B cell (primary cell): ENCODE measurements at regions of chrX and their contacts with region 1.

Region 1: GRCh38 chrX:150486011-150486410 is 82.4 kb upstream of the MTM1 start:
- DNase-seq: peak; percentile 49
- ATAC-seq: peak; percentile 33
- H3K4me3 ChIP-seq: no peak overlapping the region
- H3K4me3 Mint-ChIP-seq: no peak overlapping the region
- H3K27ac ChIP-seq: no peak overlapping the region
- H3K27ac Mint-ChIP-seq: no peak overlapping the region
- H3K4me1 ChIP-seq: no peaks in the 10 kb centered on the region
- H3K4me1 Mint-ChIP-seq: peaks cover 2% of the 10 kb centered on the region
- H3K27me3 ChIP-seq: no peaks in the 10 kb centered on the region
- H3K27me3 Mint-ChIP-seq: no peaks in the 10 kb centered on the region
- CTCF ChIP-seq: peak; percentile 49

Region 2: DNA sequence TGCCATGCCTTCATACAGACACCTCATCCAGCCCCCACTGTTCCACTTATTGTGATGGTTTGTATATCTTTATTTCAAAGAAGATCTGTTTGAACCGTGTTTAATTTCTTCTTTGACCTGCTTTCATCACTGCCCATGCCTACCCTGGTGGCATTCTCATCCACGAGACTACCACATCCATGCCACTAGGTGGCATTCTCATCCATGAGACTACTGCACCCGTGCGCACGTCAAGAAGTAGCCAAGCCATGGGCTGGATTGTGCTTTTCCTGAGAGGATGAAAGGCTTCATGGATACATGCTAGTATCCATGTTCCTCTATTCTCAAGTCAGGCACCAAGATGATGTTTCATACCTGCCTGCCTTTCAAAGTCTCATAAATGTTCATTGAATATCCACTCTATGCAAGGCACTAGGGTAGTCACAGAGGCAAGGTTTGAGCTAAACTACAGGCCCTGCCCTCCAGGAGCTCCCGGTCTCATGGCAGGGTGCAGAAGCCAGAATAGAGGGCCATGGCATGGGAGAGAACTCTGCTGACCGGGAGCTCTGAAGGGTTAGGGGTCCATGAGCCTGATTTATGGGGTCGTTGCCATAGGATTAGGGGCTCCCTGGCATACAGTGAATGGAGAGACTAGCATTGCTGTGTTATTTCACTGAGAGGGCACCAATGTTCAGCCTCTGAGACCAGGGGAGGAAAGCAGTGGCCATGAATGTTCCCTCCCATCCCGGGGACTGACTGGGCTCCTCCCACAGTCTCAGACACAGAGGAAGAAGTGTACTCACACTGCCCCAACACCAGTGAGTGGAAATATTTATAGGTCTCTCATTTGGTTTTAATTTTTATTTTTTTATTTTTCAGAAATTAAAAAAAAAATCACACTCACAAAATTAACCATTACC is 522.9 kb before region 1 on chrX:
- CTCF ChIA-PET with region 1: no interaction called
- POLR2A ChIA-PET with region 1: no interaction called
- intact Hi-C with region 1: loop called (anchors 5 kb)
- DNase-seq: peak; percentile 29
- ATAC-seq: no peak
- H3K4me3 ChIP-seq: no peak overlapping the region
- H3K4me3 Mint-ChIP-seq: no peak overlapping the region
- H3K27ac ChIP-seq: no peak overlapping the region
- H3K27ac Mint-ChIP-seq: no peak overlapping the region
- H3K4me1 ChIP-seq: no peaks in the 10 kb centered on the region
- H3K4me1 Mint-ChIP-seq: no peaks in the 10 kb centered on the region
- H3K27me3 ChIP-seq: no peaks in the 10 kb centered on the region
- H3K27me3 Mint-ChIP-seq: no peaks in the 10 kb centered on the region
- CTCF ChIP-seq: peak; percentile 49

Region 3: DNA sequence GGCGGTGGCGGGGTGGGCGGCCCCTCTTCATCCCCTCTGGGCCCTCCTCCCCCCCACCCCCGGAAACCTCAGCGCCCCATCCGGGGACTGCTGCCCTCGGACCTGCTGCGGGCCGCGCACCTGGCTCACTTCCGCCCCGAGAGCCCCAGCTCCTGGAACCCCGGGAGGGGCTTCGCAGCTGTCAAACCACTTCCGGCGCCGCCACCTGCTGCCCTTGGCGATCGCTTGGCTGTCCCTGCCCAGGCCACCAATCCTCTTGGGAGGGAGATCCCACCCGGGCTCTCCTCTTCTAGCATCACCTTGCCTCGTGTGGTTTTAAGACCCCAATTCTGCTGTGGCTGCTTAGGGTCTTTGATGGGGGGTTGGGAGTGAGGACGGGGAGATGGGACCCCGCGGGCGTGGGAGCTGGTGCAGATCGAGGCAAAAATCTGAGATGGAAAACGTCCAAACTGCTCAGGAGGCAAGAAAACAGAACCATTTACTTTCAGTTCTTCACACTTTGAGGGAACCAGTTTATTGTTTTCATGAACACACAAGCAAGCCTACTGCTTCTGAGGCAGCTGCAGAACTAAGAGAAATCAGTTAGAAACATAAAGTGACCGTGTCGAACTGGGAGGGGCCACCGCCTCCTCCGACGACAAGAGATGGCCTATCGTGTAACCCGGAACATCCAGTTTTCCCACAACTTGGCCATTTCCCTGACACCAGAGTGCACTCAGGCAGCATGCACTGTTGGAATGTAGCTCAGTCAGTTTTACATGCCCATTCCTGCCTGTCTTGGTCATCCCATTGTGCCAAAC is 208.0 kb after region 1 on chrX:
- CTCF ChIA-PET with region 1: no interaction called
- POLR2A ChIA-PET with region 1: no interaction called
- intact Hi-C with region 1: no loop called
- DNase-seq: peak; percentile 87
- ATAC-seq: peak; percentile 65
- H3K4me3 ChIP-seq: peak overlapping the region; percentile 28 to 65 (median 57)
- H3K4me3 Mint-ChIP-seq: peak overlapping the region; percentile 98
- H3K27ac ChIP-seq: peak overlapping the region; percentile 87 to 89
- H3K27ac Mint-ChIP-seq: peak overlapping the region; percentile 100
- H3K4me1 ChIP-seq: peaks cover 53 to 67% of the 10 kb centered on the region in 2 donors
- H3K4me1 Mint-ChIP-seq: peaks cover 62% of the 10 kb centered on the region
- H3K27me3 ChIP-seq: no peaks in the 10 kb centered on the region
- H3K27me3 Mint-ChIP-seq: no peaks in the 10 kb centered on the region
- CTCF ChIP-seq: no peak

Region 4: GRCh38 chrX:151042842-151043241 is 556.8 kb after region 1 on chrX:
- CTCF ChIA-PET with region 1: no interaction called
- POLR2A ChIA-PET with region 1: no interaction called
- intact Hi-C with region 1: no loop called
- DNase-seq: no peak
- ATAC-seq: no peak
- H3K4me3 ChIP-seq: no peak overlapping the region
- H3K4me3 Mint-ChIP-seq: no peak overlapping the region
- H3K27ac ChIP-seq: no peak overlapping the region
- H3K27ac Mint-ChIP-seq: no peak overlapping the region
- H3K4me1 ChIP-seq: no peaks in the 10 kb centered on the region
- H3K4me1 Mint-ChIP-seq: no peaks in the 10 kb centered on the region
- H3K27me3 ChIP-seq: no peaks in the 10 kb centered on the region
- H3K27me3 Mint-ChIP-seq: peaks cover 4% of the 10 kb centered on the region
- CTCF ChIP-seq: no peak